ENCODE measurements at regions of chr3 and their contacts with region 1.

Region 1: GRCh38 chr3:113696658-113697499 is 437 bp upstream of the USF3 start:
- DNase-seq: peak; percentile 99
- H3K4me3 Mint-ChIP-seq: no peak overlapping the region
- H3K27ac Mint-ChIP-seq: no peak overlapping the region
- H3K4me1 Mint-ChIP-seq: peaks cover 20% of the 10 kb centered on the region
- H3K27me3 Mint-ChIP-seq: no peaks in the 10 kb centered on the region

Region 2: DNA sequence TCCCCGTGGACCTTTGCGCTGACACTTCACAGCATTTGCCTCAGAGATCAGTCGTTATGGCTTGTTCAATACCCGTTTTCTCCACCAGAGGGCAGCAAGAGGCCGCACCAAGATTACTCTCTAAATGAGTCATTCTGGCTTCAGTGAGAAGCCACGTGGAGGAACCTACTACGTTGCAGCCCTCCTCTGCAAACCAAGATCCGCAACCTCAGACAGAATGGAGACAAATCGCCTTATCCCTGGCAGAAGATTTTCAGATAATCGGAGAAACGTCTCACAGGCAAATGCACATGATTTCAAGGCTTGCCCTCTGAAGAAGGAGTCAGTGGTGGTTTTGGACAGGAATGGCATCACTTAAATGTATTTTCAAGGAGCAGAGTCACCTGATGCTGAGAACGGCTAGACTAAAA is 645.6 kb before region 1 on chr3:
- intact Hi-C with region 1: loop called (anchors 5 kb)
- DNase-seq: peak; percentile 81
- H3K4me3 Mint-ChIP-seq: no peak overlapping the region
- H3K27ac Mint-ChIP-seq: no peak overlapping the region
- H3K4me1 Mint-ChIP-seq: no peaks in the 10 kb centered on the region
- H3K27me3 Mint-ChIP-seq: peaks cover 4% of the 10 kb centered on the region

Region 3: DNA sequence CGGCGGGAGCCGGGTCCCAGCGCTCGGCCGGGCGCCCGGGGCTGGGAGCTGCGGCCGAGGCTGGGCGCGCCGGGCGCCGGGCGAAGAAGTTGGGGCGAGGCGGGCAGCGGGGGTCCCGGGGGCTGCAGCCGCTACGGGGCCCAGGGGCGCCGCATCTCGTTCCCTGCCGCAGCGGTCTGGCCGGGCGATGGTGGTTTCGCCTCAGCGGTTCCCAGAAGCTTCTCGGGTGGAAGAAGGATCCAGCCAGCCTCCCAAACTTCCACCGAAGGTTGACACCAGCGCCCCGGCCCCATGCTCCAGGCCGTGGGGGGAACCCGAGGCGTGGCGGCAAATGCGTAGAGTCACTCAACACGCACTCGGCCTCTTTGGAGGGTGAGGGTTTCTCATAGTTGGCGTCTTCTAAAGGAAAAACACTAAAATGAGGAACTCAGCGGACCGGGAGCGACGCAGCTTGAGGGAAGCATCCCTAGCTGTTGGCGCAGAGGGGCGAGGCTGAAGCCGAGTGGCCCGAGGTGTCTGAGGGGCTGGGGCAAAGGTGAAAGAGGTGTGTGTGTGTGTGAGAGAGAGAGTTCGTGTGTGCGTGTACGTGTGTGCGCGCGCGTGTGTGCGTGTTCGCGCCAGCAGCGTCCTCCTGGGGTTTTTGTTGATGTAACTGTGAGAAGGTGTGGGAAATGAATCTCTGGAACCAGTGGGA is 484.6 kb before region 1 on chr3:
- intact Hi-C with region 1: no loop called
- DNase-seq: no peak
- H3K4me3 Mint-ChIP-seq: peak overlapping the region; percentile 80
- H3K27ac Mint-ChIP-seq: no peak overlapping the region
- H3K4me1 Mint-ChIP-seq: peaks cover 15% of the 10 kb centered on the region
- H3K27me3 Mint-ChIP-seq: peaks cover 65% of the 10 kb centered on the region

Region 4: DNA sequence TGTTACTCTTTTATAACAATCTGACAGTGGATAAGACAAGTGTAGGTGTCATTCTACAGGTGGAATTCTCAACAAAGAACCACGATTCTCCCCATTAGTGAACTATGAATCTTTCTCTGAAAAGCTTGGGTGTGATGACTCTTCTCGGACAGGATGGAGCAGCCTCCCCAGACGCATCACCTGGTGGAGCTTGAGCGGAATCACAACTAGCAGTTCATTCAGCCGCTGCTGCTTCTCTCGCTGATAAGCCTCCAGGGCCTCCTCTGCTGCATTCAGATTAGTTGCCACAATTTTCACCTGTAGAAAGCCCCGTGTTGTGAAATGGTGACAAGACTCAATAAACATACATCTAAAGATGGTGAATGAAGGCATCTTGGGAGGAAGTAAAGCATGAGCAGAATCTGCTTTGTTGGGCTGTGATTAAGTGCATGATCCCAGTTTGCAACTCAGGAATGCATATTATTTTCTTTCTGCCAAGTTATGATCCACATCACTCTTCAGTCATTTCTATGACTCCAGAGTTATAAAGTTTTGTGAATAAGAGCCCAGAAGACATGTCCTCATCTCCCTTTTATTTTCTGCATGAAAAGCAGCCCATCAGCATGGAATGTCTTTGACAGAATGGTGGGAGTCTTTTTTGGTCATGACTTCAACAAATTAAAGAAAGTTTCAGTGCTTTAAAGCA is 391.9 kb before region 1 on chr3:
- intact Hi-C with region 1: no loop called
- DNase-seq: no peak
- H3K4me3 Mint-ChIP-seq: no peak overlapping the region
- H3K27ac Mint-ChIP-seq: no peak overlapping the region
- H3K4me1 Mint-ChIP-seq: no peaks in the 10 kb centered on the region
- H3K27me3 Mint-ChIP-seq: no peaks in the 10 kb centered on the region

Region 5: DNA sequence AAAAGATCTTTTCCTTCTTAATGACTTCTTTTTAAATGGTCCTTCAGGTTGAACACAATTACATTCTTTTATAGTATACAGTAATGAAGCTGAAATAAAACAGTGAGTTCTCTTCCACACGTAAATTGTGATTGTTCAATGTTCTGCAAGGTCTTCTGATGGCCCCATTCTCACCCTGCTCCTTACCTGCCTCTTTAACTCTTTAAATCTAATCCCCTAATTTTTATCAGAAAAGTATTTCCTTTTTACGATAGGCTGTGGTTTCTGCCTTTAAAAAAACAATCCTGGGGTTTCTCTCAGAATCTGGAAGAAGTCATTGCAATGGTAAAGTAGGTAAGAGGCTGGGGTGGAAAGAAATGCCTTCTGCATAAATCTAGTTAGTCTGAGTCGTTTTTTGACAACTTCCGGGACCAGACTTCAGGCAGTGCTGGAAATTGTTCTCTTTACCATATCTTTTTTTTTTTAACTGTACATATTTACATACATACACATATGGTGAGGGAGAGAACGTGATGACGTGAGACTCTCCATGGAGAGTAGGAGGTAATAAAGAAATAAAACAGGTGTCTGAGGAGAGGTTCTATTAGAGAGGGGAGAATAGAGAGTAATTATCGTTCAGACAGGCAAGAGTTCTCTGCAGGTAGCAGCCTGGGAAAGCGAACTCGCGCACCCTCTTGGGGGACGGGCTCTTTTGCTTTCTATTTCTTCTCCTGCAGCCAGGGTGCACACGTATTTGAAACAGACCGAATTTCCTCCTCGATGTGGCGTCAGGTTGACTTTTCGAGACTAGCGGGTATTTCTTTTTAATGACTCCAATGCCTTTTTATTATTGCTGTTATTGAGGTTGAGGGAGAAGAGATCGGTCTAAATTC is 164.8 kb before region 1 on chr3 and contains the start of gene SIDT1:
- intact Hi-C with region 1: loop called (anchors 5 kb)
- DNase-seq: peak; percentile 64
- H3K4me3 Mint-ChIP-seq: peak within 1 kb of the TSS; percentile 100
- H3K27ac Mint-ChIP-seq: peak within 1 kb of the TSS; percentile 99
- H3K4me1 Mint-ChIP-seq: peaks cover 55% of the 10 kb centered on the region
- H3K27me3 Mint-ChIP-seq: peaks cover 10% of the 10 kb centered on the region
- total RNA-seq, gene SIDT1: 11.3 and 12.2 TPM in 2 replicates

Region 6: DNA sequence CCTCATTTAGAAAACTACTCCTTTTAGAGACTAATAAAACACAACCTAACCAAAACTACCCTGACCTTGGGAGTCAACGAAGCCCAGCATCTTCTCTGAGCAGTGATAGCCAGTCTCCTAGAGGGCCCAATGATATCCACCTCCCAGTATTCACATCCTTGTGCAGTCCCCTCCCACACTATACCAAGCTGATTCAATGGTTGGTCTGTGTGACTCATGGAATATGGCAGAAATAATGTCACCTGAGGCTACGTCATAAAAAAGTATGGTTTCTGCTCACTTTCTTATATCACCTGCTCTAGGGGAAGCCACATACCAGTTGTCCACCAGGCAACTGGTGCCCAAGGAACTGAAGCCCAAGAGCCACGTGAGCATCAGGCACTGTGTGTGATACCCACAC is 20.9 kb after region 1 on chr3:
- intact Hi-C with region 1: loop called (anchors 2 kb)
- DNase-seq: no peak
- H3K4me3 Mint-ChIP-seq: no peak overlapping the region
- H3K27ac Mint-ChIP-seq: peak overlapping the region; percentile 62
- H3K4me1 Mint-ChIP-seq: peaks cover 9% of the 10 kb centered on the region
- H3K27me3 Mint-ChIP-seq: no peaks in the 10 kb centered on the region

Region 7: DNA sequence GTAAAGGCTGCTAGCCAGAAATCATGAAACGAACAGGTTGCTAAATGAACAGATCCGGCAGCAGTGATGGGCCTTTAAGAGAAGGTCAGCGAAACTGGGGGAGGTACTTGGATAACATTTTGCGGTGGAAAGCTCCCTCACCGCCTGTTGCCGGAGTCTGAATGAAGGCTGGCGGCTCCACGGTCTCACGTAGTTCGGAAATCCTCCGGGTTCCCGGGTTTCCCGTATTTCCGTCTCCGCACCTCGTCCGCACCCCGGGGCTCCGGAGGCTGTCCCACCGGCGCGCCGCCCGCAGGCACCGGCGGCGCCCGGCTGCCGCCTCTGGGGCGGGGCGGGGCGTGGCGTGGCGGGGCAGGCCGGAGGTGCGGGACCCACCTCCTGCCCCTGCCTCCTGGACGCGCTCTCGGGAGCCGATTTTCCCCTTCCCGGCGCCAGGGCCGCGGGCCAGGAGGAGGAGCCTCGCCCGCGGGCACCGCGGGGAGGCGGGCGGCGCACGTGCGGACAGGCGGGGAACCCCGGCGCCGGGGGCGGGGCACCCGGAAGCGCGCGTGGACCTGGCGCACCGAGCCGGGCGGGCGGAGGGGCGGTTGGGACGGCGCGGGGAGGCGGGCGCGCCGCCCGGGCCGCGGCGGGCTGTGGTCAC is 250.6 kb after region 1 on chr3 and contains the start of gene ZDHHC23:
- intact Hi-C with region 1: loop called (anchors 2 kb)
- DNase-seq: peak; percentile 66
- H3K4me3 Mint-ChIP-seq: peak within 1 kb of the TSS; percentile 85
- H3K27ac Mint-ChIP-seq: peak within 1 kb of the TSS; percentile 79
- H3K4me1 Mint-ChIP-seq: no peaks in the 10 kb centered on the region
- H3K27me3 Mint-ChIP-seq: peaks cover 41% of the 10 kb centered on the region
- total RNA-seq, gene ZDHHC23: 0.88 and 1.8 TPM in 2 replicates

Region 8: DNA sequence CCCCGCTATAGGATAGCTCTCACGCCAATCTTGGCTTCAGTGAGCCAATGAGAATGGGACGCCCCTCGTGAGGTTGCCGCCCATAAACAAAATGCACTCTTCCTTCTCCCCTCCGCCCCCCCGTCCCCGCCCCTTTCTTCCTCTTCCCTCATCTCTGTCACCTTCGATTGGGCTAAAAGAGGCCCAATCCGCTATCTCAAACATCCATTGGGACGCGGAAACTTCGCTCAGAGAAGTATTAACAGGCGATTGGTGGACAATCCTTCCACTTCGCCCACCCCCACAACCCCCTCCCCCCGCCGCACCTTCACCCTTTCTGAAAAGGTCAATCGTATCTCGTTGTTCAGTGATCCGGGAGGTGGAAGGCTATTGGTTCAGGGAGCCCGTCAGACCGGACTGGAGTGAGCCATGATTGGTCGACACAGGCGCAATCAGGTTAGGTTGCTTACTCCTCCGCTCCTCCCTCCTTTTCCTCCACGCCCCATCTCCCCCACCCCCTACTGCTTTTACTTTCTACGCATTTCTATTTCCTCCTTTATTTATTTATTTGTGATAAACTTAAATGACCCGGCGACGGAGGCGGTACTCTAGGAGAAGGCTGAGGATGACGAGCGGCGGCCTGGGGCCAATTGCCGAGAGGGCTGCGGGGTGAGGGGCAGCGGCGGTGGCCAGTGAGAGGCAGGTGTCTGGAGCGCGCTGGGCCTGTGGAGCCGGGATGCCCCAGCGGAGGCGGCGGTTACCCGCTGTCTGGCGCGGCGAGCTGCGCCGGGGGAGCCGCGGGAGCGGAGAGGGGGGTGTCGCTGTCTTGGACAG is 1450.7 kb after region 1 on chr3:
- intact Hi-C with region 1: loop called (anchors 1 kb)
- DNase-seq: peak; percentile 96
- H3K4me3 Mint-ChIP-seq: peak overlapping the region; percentile 96
- H3K27ac Mint-ChIP-seq: peak overlapping the region; percentile 98
- H3K4me1 Mint-ChIP-seq: peaks cover 16% of the 10 kb centered on the region
- H3K27me3 Mint-ChIP-seq: no peaks in the 10 kb centered on the region